Naive thymus-derived CD4-positive, alpha-beta T cell (primary cell): ENCODE measurements at regions of chr3 and their contacts with region 1.

Region 1: DNA sequence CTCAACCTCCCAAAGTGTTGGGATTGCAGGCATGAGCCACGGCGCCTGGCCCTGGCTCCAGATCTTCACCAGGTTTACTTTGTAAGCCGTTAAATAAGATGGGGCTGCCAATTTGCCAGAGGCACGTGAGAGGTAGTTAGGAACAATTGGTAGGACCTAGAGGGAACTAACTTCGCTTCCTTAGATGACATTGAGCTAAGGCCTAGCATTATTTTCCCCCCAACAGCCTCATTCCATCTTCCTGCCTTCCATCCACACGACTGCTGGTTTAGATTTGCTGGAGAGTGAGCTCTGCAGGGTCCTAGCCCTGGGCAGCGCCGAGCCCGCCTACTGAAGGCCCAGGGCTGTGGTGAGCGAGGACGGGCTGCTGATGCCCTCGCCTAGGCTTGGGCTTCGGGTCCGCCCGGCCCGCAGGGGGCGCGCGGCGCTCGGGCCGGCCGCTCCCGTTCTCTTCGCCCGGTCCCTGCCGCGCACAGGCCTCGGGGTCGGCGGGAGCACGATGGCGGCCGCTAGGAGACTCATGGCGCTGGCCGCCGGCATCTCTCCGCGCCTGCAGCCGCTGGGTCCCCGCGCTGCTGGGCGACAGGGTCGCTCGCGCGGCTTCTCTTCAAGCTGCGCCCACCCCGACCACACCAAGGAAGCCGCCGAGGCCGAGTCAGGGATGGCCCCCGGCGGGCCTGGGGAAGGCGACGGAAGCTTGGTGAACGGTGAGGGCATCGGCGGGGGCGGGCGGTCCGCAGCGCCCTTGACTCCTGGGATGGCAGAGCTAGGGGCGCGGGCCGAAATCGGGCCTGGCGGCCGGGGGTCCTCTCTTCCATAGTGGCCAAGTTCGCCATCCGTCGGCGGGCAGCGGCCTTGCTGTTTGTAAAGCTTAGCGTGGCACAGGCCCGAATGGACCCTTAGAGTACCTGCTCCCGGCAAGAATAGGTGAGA is 21.9 kb downstream of the DHX30 start:
- DNase-seq: peak; percentile 62 to 86 (median 79)
- ATAC-seq: peak; percentile 100
- H3K4me3 ChIP-seq: peak overlapping the region; percentile 79
- H3K4me3 Mint-ChIP-seq: peak overlapping the region; percentile 81 to 94 (median 90)
- H3K27ac ChIP-seq: peak overlapping the region; percentile 88
- H3K27ac Mint-ChIP-seq: peak overlapping the region; percentile 66 to 96 (median 89)
- H3K4me1 ChIP-seq: peaks cover 15% of the 10 kb centered on the region in 2 donors
- H3K4me1 Mint-ChIP-seq: peaks cover 15 to 46% (median 36%) of the 10 kb centered on the region in 7 donors
- H3K27me3 ChIP-seq: no peaks in the 10 kb centered on the region
- H3K27me3 Mint-ChIP-seq: no peaks in the 10 kb centered on the region

Region 2: GRCh38 chr3:47522082-47522987 is 302.5 kb before region 1 on chr3:
- CTCF ChIA-PET with region 1: interaction called, 5 read pairs
- POLR2A ChIA-PET with region 1: interaction called, 4 read pairs
- intact Hi-C with region 1: loop called in 1 of 2 experiments (anchors 1 kb)
- DNase-seq: peak; percentile 36 to 75 (median 60)
- ATAC-seq: peak; percentile 97
- H3K4me3 ChIP-seq: no peak overlapping the region
- H3K4me3 Mint-ChIP-seq: no peak overlapping the region
- H3K27ac ChIP-seq: no peak overlapping the region
- H3K27ac Mint-ChIP-seq: peak overlapping the region in 2 of 9 donors; percentile 15 to 67
- H3K4me1 ChIP-seq: no peaks in the 10 kb centered on the region
- H3K4me1 Mint-ChIP-seq: peaks cover 0 to 11% (median 0%) of the 10 kb centered on the region in 7 donors
- H3K27me3 ChIP-seq: no peaks in the 10 kb centered on the region
- H3K27me3 Mint-ChIP-seq: peaks cover 0 to 8% (median 0%) of the 10 kb centered on the region in 5 donors

Region 3: DNA sequence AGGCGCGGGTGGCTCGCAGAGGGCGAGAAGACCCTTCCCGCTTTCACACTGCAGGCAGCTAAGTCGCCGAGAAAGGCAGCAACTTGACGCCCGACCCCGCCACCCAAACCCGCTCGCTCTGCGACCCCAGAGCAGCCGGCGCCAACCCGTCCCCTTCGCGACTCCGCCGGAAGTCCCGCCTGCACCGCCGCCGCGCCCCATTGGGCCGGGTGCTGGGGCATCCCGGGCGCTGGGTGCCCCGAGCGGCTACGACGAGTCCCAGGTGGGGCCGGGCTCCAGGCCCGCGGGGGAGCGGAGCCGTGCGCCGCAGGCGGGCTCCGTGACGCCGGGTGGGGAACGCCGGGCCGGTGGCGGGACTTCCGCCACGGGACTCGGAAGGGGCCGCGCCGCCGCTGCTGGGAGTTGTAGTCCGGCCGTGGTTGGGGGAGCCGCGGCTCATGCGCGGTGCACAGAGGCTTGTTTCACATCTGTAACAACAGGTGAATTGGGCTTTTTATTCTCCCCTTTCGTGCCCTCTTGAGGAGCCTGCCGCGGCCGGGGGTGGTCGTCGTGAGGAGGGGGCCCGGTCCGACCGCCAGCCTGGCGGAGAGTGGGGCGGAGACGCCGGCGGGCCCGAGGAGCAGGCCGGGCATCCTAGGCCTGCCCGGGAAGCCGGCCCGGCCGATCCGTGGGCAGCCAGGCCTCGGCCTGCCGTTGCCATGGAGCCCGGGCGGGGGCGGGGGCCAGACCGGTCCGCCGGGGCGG is 21.9 kb before region 1 on chr3 and contains the start of gene DHX30:
- CTCF ChIA-PET with region 1: no interaction called
- POLR2A ChIA-PET with region 1: interaction called, 14 read pairs
- intact Hi-C with region 1: loop called (anchors 1 kb)
- DNase-seq: peak; percentile 77 to 90 (median 82)
- ATAC-seq: peak; percentile 95
- H3K4me3 ChIP-seq: peak within 1 kb of the TSS; percentile 65
- H3K4me3 Mint-ChIP-seq: peak within 1 kb of the TSS; percentile 89 to 98 (median 95)
- H3K27ac ChIP-seq: peak within 1 kb of the TSS; percentile 92
- H3K27ac Mint-ChIP-seq: peak within 1 kb of the TSS; percentile 92 to 98 (median 95)
- H3K4me1 ChIP-seq: peaks cover 11 to 12% of the 10 kb centered on the region in 2 donors
- H3K4me1 Mint-ChIP-seq: peaks cover 6 to 25% (median 20%) of the 10 kb centered on the region in 7 donors
- H3K27me3 ChIP-seq: no peaks in the 10 kb centered on the region
- H3K27me3 Mint-ChIP-seq: no peaks in the 10 kb centered on the region
- total RNA-seq, gene DHX30: 64.1 to 103 (median 92.0) TPM